ENCODE measurements at regions of chr19 and their contacts with region 1.

Region 1: DNA sequence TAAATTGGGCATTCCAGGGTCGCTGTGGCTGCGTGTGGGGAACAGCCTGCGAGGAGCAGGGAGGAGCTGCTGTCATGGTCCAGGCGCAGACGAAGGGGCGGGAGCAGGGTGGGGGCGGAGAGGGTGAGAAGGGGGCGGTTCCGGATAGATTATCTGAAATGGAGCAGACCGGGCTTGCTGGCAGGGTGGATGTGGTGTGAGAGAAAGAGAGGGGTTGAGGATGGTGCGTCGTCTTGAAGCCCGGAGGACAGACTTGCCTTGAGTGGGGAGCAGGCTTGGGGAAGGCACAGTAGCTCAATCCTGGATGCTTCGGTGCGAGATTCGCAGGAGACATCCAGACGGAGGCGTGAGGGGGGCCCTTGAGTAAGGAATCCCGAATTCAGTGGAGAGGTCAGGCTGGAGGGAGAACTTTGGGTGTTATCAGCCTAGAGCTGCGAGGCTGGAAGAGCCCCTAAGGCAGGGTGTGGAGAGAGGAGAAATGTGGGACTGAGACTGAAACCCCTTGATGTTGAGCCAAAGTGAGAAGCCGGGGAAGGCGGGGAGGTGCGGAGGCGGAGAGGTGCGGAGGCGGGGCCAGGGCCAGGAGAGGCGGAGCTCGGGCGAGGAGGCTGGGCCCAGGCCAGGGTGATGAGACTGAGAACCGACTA is 40.6 kb downstream of the DPF1 start:
- DNase-seq: peak; percentile 40 to 79 (median 57)
- ATAC-seq: peak; percentile 57 to 78 (median 72)
- H3K4me3 ChIP-seq: peak overlapping the region in 10 of 12 donors; percentile 25 to 49 (median 32)
- H3K27ac ChIP-seq: peak overlapping the region in 10 of 12 donors; percentile 16 to 67 (median 56)
- H3K4me1 ChIP-seq: no peaks in the 10 kb centered on the region
- H3K27me3 ChIP-seq: no peaks in the 10 kb centered on the region
- CTCF ChIP-seq: no peak
- POLR2A ChIP-seq: no peak

Region 2: GRCh38 chr19:38209671-38210457 is 26.5 kb after region 1 on chr19:
- intact Hi-C with region 1: loop called in 1 of 10 experiments (anchors 1 kb)
- DNase-seq: peak; percentile 76 to 90 (median 86)
- ATAC-seq: peak; percentile 82 to 90 (median 88)
- H3K4me3 ChIP-seq: peak overlapping the region in 10 of 12 donors; percentile 2 to 50 (median 31)
- H3K27ac ChIP-seq: peak overlapping the region in 11 of 12 donors; percentile 53 to 92 (median 72)
- H3K4me1 ChIP-seq: peaks cover 0 to 29% (median 17%) of the 10 kb centered on the region in 12 donors
- H3K27me3 ChIP-seq: peaks cover 0 to 38% (median 16%) of the 10 kb centered on the region in 9 donors
- CTCF ChIP-seq: no peak
- POLR2A ChIP-seq: no peak

Measured in heart left ventricle (tissue), 16 donors.